ENCODE measurements at regions of chr6 and their contacts with region 1.

Region 1: GRCh38 chr6:136226027-136226673 is 24.0 kb downstream of the MTFR2 start:
- DNase-seq: peak in 1 of 2 donors; percentile 50
- ATAC-seq: peak; percentile 63 to 95 (median 86)
- H3K4me3 ChIP-seq: peak overlapping the region in 7 of 10 donors; percentile 16 to 40 (median 34)
- H3K27ac ChIP-seq: peak overlapping the region in 5 of 10 donors; percentile 5 to 36 (median 23)
- H3K4me1 ChIP-seq: peaks cover 0 to 18% (median 5%) of the 10 kb centered on the region in 9 donors
- H3K27me3 ChIP-seq: no peaks in the 10 kb centered on the region
- CTCF ChIP-seq: peak; percentile 99 to 100 (median 100)

Region 2: DNA sequence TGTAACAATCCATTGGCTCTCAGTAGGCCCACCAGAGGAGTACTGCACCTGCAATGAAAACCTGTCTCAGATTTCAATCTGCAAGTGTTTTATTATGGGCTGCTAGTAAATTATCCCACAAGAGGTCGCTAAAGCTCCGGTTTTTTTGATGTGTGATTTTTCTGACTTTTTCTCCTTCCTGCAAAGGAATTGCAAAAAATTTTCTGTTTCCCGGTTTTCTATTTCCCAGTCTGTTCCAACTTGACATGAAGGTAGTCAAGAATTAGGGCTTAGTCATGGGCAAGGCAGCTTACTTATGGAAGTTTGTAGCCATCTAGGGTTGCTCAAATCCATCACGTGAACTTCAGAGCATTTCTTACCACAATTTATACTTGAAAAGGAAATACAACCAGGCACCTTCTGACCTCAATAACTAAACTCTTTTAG is 690.1 kb before region 1 on chr6:
- intact Hi-C with region 1: loop called (anchors 1 to 10 kb)
- DNase-seq: peak in 1 of 2 donors; percentile 12
- ATAC-seq: peak in 2 of 8 donors; percentile 48 to 49
- H3K4me3 ChIP-seq: no peak overlapping the region
- H3K27ac ChIP-seq: no peak overlapping the region
- H3K4me1 ChIP-seq: peaks cover 0 to 20% (median 0%) of the 10 kb centered on the region in 9 donors
- H3K27me3 ChIP-seq: no peaks in the 10 kb centered on the region
- CTCF ChIP-seq: peak; percentile 51 to 85 (median 75)

Region 3: DNA sequence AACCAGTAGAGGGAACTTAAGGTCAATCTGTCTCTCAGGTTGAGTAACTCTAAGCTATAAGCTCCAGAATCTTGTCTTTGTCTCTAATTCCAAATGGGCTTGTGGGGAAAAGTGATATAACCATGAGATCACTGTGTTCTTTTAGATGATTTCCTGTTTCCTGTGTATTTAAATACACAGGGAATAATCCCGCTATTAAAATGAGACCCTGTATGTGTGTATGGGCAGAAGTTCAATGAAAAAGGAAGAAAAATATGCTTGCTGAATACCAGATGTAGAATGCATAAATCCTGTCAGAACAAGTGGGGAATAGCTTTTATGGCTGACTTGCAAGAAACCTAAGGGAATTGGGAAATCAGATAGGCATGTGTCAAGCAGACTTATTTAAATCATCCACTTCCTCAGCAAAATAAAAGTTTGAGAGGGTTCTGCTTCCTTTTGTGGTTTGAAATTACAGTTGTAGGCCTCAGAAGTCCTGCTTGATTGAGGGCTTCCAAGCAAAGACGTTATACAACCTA is 539.3 kb before region 1 on chr6:
- intact Hi-C with region 1: loop called in 1 of 10 experiments (anchors 10 kb)
- DNase-seq: no peak
- ATAC-seq: peak in 7 of 8 donors; percentile 37 to 91 (median 77)
- H3K4me3 ChIP-seq: no peak overlapping the region
- H3K27ac ChIP-seq: peak overlapping the region; percentile 7 to 69 (median 53)
- H3K4me1 ChIP-seq: peaks cover 0 to 21% (median 13%) of the 10 kb centered on the region in 9 donors
- H3K27me3 ChIP-seq: no peaks in the 10 kb centered on the region
- CTCF ChIP-seq: no peak

Region 4: GRCh38 chr6:135938576-135939207 is 287.5 kb before region 1 on chr6:
- intact Hi-C with region 1: loop called in 1 of 10 experiments (anchors 10 kb)
- DNase-seq: peak; percentile 26 to 36
- ATAC-seq: peak; percentile 62 to 84 (median 80)
- H3K4me3 ChIP-seq: peak overlapping the region in 6 of 10 donors; percentile 5 to 27 (median 20)
- H3K27ac ChIP-seq: peak overlapping the region; percentile 16 to 79 (median 70)
- H3K4me1 ChIP-seq: peaks cover 0 to 15% (median 3%) of the 10 kb centered on the region in 9 donors
- H3K27me3 ChIP-seq: no peaks in the 10 kb centered on the region
- CTCF ChIP-seq: peak in 8 of 9 donors; percentile 13 to 64 (median 48)

Region 5: DNA sequence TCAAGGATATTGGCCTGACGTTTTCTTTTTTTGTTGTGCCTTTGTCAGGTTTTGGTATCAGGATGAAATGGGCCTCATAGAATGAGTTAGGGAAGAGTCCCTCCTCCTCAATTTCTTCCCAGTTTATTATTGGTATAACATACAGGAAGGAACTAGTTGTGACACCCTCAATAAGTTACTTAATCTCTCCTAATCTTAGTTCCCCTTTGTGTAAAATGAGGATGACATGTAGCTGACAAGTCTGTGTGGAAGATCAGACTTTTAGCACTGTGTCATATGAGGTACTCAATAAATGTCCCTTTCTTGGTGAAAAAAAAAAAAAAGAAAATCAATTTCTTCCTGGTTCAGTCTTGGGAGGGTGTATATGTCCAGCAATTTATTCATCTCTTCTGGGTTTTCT is 218.8 kb before region 1 on chr6:
- intact Hi-C with region 1: no loop called
- DNase-seq: no peak
- ATAC-seq: peak in 1 of 8 donors; percentile 34
- H3K4me3 ChIP-seq: no peak overlapping the region
- H3K27ac ChIP-seq: no peak overlapping the region
- H3K4me1 ChIP-seq: peaks cover 0 to 20% (median 8%) of the 10 kb centered on the region in 9 donors
- H3K27me3 ChIP-seq: no peaks in the 10 kb centered on the region
- CTCF ChIP-seq: no peak

Region 6: GRCh38 chr6:136031982-136032381 is 194.2 kb before region 1 on chr6:
- intact Hi-C with region 1: loop called in 9 of 10 experiments (anchors 1 to 10 kb)
- DNase-seq: peak in 1 of 2 donors; percentile 46
- ATAC-seq: peak in 7 of 8 donors; percentile 46 to 68 (median 53)
- H3K4me3 ChIP-seq: no peak overlapping the region
- H3K27ac ChIP-seq: no peak overlapping the region
- H3K4me1 ChIP-seq: peaks cover 4 to 52% (median 32%) of the 10 kb centered on the region in 9 donors
- H3K27me3 ChIP-seq: no peaks in the 10 kb centered on the region
- CTCF ChIP-seq: peak in 8 of 9 donors; percentile 28 to 72 (median 56)

Region 7: GRCh38 chr6:136945711-136946121 is 719.6 kb after region 1 on chr6:
- intact Hi-C with region 1: no loop called
- DNase-seq: no peak
- ATAC-seq: no peak
- H3K4me3 ChIP-seq: no peak overlapping the region
- H3K27ac ChIP-seq: no peak overlapping the region
- H3K4me1 ChIP-seq: no peaks in the 10 kb centered on the region
- H3K27me3 ChIP-seq: peaks cover 0 to 29% (median 4%) of the 10 kb centered on the region in 7 donors
- CTCF ChIP-seq: no peak